Tibial artery (tissue), 4 donors: ENCODE measurements at regions of chrX and their contacts with region 1.

Region 1: GRCh38 chrX:40013266-40014195 is 84.2 kb downstream of the BCOR start:
- DNase-seq: peak; percentile 62 to 86
- H3K4me3 ChIP-seq: peak overlapping the region; percentile 62 to 66
- H3K27ac ChIP-seq: peak overlapping the region; percentile 94 to 96
- H3K4me1 ChIP-seq: peaks cover 0 to 49% (median 13%) of the 10 kb centered on the region in 4 donors
- H3K27me3 ChIP-seq: no peaks in the 10 kb centered on the region
- CTCF ChIP-seq: no peak

Region 2: DNA sequence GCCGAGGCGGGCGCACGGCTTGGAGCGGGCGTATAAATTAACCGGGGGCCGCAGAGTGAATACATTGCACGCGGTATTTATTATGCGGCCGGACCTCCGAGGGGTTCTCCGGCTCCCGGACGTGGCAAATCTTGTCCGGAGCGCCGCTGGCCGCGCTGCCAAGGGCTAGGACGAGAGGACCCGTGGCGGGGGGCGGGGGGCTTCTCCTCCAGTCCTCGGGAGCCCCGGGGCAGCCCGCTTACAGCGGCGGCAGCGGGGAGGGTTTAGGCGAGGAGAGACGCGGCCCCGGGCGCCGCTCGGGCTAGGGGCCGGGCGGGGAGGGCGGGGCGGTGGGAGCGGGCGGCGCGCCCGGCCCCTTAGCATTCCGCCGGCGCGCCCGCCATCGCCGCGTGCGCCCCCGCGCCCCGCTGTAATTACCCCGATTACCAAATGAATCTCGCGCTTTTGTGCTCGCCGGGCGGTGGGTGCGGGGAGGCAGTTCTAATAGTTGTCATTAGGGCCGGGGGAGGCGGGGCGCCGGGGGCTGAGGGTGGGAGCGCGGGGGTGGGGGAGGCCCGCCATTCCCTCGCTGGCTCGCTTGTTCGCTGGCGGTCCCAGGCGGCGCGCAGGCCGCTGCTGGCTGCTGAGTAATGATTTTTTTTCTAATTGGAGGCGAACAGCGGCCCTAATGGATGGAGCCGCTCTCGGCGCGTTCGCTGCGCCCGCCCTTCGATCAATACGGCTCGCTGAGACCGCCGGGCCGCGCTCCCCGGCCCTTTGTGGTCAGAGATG is 192.4 kb before region 1 on chrX:
- intact Hi-C with region 1: loop called (anchors 10 kb)
- DNase-seq: no peak
- H3K4me3 ChIP-seq: peak overlapping the region; percentile 49 to 54
- H3K27ac ChIP-seq: peak overlapping the region in 1 of 2 donors; percentile 49
- H3K4me1 ChIP-seq: peaks cover 0 to 44% (median 19%) of the 10 kb centered on the region in 4 donors
- H3K27me3 ChIP-seq: no peaks in the 10 kb centered on the region
- CTCF ChIP-seq: no peak

Region 3: GRCh38 chrX:39907964-39908616 is 105.4 kb before region 1 on chrX:
- intact Hi-C with region 1: loop called (anchors 2 kb)
- DNase-seq: peak; percentile 61 to 91
- H3K4me3 ChIP-seq: peak overlapping the region in 1 of 2 donors; percentile 24
- H3K27ac ChIP-seq: peak overlapping the region; percentile 31 to 65
- H3K4me1 ChIP-seq: peaks cover 0 to 52% (median 18%) of the 10 kb centered on the region in 4 donors
- H3K27me3 ChIP-seq: no peaks in the 10 kb centered on the region
- CTCF ChIP-seq: no peak

Region 4: DNA sequence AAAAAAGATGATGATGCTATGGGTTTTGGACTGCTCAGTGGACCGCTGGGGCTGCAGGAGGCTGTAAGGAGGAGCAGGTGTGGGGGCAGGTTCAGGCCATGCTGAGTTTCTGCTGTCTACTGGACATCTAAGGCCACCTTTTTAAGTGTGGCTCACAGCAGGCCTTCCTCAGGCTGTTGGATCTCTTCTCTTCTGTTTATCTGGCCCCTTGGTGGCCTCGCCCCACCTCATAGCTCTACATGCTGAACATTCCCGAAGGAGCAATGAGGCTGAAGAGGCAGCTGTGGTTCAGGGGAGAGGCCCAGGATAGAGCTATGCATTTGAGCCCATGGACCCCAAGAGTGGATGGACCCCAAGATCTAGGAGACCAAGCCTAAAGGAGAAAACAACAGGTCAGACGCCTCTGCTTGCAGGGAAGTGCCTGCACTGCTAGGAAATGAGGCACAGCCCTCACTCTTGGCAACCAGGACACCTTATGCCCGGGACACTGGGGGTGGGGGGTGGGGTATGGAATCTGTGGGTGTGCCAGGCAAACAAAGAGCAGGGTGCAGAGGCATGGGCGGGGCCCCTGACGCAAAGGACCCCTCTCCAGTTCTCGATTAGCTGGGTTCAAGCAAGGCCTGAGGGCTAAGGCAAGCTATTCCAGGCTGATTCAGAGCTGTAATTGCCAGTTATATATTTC is 84.7 kb before region 1 on chrX:
- intact Hi-C with region 1: no loop called
- DNase-seq: no peak
- H3K4me3 ChIP-seq: no peak overlapping the region
- H3K27ac ChIP-seq: no peak overlapping the region
- H3K4me1 ChIP-seq: peaks cover 0 to 14% (median 4%) of the 10 kb centered on the region in 4 donors
- H3K27me3 ChIP-seq: no peaks in the 10 kb centered on the region
- CTCF ChIP-seq: no peak

Region 5: GRCh38 chrX:40127052-40127451 is 113.5 kb after region 1 on chrX:
- intact Hi-C with region 1: no loop called
- DNase-seq: no peak
- H3K4me3 ChIP-seq: no peak overlapping the region
- H3K27ac ChIP-seq: no peak overlapping the region
- H3K4me1 ChIP-seq: peaks cover 0 to 18% (median 2%) of the 10 kb centered on the region in 4 donors
- H3K27me3 ChIP-seq: no peaks in the 10 kb centered on the region
- CTCF ChIP-seq: no peak

Region 6: GRCh38 chrX:40169193-40170101 is 155.9 kb after region 1 on chrX:
- intact Hi-C with region 1: loop called (anchors 5 kb)
- DNase-seq: peak in 1 of 2 donors; percentile 70
- H3K4me3 ChIP-seq: no peak overlapping the region
- H3K27ac ChIP-seq: no peak overlapping the region
- H3K4me1 ChIP-seq: peaks cover 0 to 54% (median 19%) of the 10 kb centered on the region in 4 donors
- H3K27me3 ChIP-seq: no peaks in the 10 kb centered on the region
- CTCF ChIP-seq: no peak